Activated CD8-positive, alpha-beta T cell treated with anti-CD3 and anti-CD28 coated beads for 36 hours (primary cell): ENCODE measurements at regions of chr17 and their contacts with region 1.

Region 1: DNA sequence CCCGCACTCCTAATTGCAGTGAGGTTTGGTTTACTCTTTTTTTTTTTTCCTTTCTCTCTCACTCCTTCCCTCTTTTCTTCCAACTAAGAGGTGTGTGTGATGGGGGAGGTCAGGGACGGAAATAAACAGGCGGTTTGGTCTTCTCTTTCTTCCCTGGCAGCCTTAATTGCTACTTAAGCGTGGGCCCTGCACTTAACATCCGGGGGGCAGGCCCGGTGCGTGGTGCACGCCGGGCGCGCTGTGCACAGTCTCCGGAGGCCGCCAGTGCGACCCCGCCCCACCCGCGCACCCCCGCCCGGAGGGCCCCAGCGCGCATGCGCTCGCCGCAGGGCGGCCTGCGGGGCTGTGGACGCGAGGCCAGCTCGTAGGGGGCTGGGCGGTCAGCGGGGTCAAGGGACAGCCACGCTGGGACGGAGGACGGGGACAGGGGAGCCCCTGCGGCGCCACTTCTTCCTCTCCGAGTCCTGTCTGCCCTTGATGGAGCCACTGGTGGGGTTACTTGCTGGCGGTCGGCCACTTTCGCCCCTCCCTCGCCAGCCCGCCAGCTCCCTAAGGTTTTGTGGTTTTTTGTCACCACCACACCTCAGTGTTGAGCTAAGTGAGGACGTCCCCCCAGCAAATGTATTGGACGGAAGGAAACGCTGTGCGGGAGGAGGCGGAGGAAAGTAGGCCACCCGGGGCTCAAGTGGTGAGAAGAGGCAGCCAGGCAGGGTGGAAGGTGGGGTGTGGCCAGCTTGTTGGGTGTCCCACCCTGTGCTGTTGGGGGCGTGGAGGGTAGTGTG is 120.9 kb downstream of the MRM1 start:
- DNase-seq: peak; percentile 90
- ATAC-seq: peak; percentile 94
- H3K4me3 Mint-ChIP-seq: peak overlapping the region; percentile 80
- H3K27ac Mint-ChIP-seq: peak overlapping the region; percentile 99
- H3K4me1 Mint-ChIP-seq: peaks cover 51% of the 10 kb centered on the region
- H3K27me3 Mint-ChIP-seq: no peaks in the 10 kb centered on the region
- CTCF ChIP-seq: no peak

Region 2: GRCh38 chr17:36937966-36938565 is 215.8 kb after region 1 on chr17:
- CTCF ChIA-PET with region 1: no interaction called
- POLR2A ChIA-PET with region 1: interaction called, 3 read pairs
- intact Hi-C with region 1: loop called (anchors 10 kb)
- DNase-seq: peak; percentile 59
- ATAC-seq: peak; percentile 19
- H3K4me3 Mint-ChIP-seq: peak overlapping the region; percentile 66
- H3K27ac Mint-ChIP-seq: no peak overlapping the region
- H3K4me1 Mint-ChIP-seq: peaks cover 61% of the 10 kb centered on the region
- H3K27me3 Mint-ChIP-seq: peaks cover 79% of the 10 kb centered on the region
- CTCF ChIP-seq: no peak